Activated CD4-positive, alpha-beta T cell treated with anti-CD3 and anti-CD28 coated beads, Interleukin-2, amount 10 ng/mL, durations not matched to agents 24 days and 14 days (primary cell): ENCODE measurements at regions of chr2 and their contacts with region 1.

Region 1: DNA sequence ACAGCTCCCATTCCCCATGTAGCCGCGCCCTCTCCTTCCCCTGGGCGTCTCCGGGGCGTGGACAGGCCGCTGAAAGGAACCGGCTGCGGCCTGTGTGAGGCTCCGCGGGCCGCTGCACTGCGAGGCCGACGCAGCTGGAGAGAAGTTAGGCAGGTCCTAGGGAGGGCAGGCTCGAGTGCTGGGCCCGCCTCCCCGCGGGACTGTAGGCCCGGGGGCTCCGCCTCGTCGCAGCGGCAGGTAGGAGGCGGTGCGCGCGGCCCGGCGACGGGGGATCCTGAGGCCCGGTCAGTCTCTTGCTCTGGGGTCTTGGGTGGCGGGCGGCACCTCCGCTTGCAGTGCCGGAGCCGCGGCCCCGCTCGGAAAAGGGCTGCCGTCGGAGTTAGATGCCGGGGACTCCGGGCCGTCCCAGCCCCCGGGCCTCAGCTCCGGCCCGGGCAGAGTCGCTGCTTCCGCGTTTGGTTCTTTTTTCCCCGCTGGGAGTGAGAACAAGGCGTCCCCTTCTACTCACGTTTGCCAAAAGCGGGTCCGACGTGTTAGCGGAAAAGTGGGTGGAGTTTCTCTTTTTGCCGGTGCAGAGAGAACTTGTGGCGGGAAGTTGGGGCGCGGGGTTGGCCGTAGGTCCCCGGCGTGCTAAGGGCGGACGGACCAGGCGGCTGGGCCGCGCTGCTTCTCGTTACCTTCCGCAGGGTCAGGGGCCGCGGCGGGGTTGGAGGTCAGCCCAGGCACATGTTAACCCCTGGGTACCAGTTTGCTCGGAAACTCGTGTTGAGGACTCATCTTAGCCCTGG is at the start of gene VRK2:
- DNase-seq: peak; percentile 96
- H3K4me3 Mint-ChIP-seq: peak within 1 kb of the TSS; percentile 92
- H3K27ac Mint-ChIP-seq: peak within 1 kb of the TSS; percentile 95
- H3K4me1 Mint-ChIP-seq: peaks cover 45% of the 10 kb centered on the region
- H3K27me3 Mint-ChIP-seq: no peaks in the 10 kb centered on the region
- total RNA-seq, gene VRK2: 21.7 and 22.0 TPM in 2 replicates

Region 2: DNA sequence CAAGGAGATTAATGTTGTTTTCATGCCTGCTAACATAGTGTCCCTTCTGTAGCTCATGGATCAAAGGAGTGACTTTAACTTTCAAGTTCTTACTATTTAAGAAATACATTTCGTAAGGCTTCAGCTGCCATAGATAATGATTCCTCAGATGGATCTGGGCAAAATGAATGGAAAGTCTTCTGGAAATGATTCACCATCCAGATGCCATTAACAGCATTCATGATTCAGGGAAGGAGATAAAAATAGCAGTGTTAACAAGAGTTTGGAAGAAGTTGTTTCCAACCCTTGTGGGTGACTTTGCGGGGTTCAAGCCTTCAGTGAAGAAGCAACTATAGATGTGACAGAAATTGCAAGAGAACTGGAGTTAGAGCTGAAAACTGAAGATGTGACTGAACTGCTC is 16.9 kb after region 1 on chr2:
- intact Hi-C with region 1: no loop called
- DNase-seq: no peak
- H3K4me3 Mint-ChIP-seq: peak overlapping the region; percentile 27
- H3K27ac Mint-ChIP-seq: peak overlapping the region; percentile 5
- H3K4me1 Mint-ChIP-seq: peaks cover 18% of the 10 kb centered on the region
- H3K27me3 Mint-ChIP-seq: no peaks in the 10 kb centered on the region

Region 3: DNA sequence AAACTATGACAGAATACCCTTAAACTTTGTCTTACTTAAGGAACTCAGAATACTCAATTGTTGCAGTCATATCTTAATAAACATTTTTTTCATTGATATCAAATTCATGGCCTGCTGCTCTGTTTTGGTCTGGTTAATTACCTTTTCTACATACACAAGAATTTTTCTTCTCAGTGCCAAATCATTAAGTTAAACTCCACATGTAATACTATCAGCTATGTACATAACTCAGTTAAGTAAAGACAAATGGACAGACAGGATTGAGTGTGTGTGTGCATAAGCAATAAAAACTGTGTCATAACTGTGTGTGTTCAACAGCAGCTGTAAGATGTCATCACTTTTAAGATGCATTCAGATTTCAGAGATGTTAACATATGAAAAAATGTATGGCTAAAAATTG is 34.2 kb after region 1 on chr2:
- intact Hi-C with region 1: no loop called
- DNase-seq: no peak
- H3K4me3 Mint-ChIP-seq: no peak overlapping the region
- H3K27ac Mint-ChIP-seq: no peak overlapping the region
- H3K4me1 Mint-ChIP-seq: no peaks in the 10 kb centered on the region
- H3K27me3 Mint-ChIP-seq: no peaks in the 10 kb centered on the region

Region 4: GRCh38 chr2:58107803-58108710 is 61.3 kb after region 1 on chr2:
- intact Hi-C with region 1: loop called (anchors 5 kb)
- DNase-seq: no peak
- H3K4me3 Mint-ChIP-seq: no peak overlapping the region
- H3K27ac Mint-ChIP-seq: peak overlapping the region; percentile 46
- H3K4me1 Mint-ChIP-seq: peaks cover 10% of the 10 kb centered on the region
- H3K27me3 Mint-ChIP-seq: no peaks in the 10 kb centered on the region

Region 5: GRCh38 chr2:58146707-58147106 is 99.9 kb after region 1 on chr2:
- intact Hi-C with region 1: loop called (anchors 5 kb)
- DNase-seq: no peak
- H3K4me3 Mint-ChIP-seq: no peak overlapping the region
- H3K27ac Mint-ChIP-seq: no peak overlapping the region
- H3K4me1 Mint-ChIP-seq: peaks cover 8% of the 10 kb centered on the region
- H3K27me3 Mint-ChIP-seq: no peaks in the 10 kb centered on the region

Region 6: DNA sequence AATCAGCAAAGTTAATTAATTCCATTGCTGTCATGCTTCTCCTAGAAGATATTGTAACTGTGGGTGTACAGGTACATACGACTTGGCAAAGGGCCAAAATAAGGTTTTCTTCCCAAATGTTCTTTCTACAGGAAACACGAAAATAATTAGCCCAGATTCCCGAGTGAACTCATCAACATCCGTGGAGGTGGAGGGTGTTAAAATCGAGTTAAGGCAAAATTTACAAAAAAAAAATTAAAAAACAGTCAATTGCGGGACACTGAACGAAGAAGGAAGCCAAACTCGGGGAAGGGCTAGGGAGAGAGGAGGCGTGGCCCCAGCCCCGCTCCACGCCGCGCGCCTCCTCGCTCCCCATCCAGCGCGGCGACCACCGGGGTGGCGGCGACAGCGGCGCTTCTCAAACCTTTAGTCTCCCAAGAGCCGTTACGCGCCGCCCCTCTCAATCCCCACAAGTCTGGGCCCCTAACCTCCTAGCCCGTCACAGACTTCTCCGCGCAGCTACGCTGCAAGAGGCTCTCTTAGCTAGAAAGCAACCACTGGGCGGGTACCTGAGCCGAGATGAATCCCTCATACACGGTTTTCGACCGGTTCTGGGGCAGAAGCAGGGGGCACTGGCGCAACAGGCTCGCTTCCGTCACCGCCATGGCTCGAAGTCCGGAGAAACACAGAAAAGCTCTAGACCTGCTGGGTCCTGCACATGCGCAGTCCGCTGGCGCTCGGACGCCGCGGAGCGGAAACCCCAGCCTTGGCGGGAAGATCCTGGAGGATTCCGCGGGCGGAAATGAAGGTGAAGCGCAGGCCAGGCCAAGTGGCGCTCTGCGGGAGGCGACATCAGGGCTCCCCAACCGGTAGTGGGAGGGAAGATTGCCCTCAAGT is 194.1 kb after region 1 on chr2 and contains the start of gene FANCL:
- intact Hi-C with region 1: loop called (anchors 1 kb)
- DNase-seq: peak; percentile 92
- H3K4me3 Mint-ChIP-seq: peak within 1 kb of the TSS; percentile 88
- H3K27ac Mint-ChIP-seq: peak within 1 kb of the TSS; percentile 83
- H3K4me1 Mint-ChIP-seq: peaks cover 29% of the 10 kb centered on the region
- H3K27me3 Mint-ChIP-seq: peaks cover 15% of the 10 kb centered on the region
- total RNA-seq, gene FANCL: 21.2 and 26.3 TPM in 2 replicates